K562 (cell line): ENCODE measurements at regions of chr11 and their contacts with region 1.

Region 1: DNA sequence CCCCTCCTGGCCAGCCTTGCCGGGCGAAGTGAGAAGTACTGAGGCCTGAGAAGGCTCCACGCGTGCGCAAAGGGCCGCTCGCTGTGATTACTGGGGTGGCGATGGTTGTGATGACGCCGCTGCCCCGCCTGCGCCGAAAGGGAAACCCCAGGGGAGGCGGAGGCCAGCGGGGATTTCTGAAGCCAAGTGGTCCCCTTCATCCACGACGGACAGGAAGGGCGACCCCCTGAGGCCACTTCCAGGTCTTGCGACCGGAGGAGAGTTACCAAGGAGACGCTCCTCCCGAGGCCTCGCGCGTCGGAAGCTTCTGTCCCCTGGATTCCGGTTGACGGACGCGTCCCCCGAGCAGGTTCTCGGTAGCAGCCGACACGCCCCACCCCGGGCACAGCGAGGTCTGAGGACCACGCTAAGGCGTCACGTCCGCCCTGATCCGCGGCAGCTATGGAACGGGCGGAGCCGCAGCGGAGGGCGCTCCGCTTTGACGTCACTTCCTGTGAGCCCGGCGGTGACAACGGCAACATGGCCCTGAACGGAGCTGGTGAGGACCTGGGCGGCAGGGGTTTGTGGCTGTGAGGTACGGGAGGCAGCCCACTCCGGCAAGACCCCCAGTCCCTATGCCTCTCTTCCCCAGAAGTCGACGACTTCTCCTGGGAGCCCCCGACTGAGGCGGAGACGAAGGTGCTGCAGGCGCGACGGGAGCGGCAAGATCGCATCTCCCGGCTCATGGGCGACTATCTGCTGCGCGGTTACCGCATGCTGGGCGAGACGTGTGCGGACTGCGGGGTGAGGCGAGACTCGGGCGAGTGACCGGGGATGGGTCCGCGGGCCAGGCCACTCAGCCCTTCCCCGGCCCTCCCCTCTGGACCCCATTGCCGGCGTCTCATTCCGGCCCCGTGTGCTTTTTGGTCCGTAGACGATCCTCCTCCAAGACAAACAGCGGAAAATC is at the start of gene ZNRD2:
- DNase-seq: peak; percentile 88 to 99 (median 92)
- ATAC-seq: peak; percentile 82
- H3K4me3 ChIP-seq: peak within 1 kb of the TSS; percentile 65
- H3K27ac ChIP-seq: peak within 1 kb of the TSS; percentile 68
- H3K4me1 ChIP-seq: peaks cover 39 to 63% of the 10 kb centered on the region in 2 experiments
- H3K27me3 ChIP-seq: no peaks in the 10 kb centered on the region
- CTCF ChIP-seq: peak; percentile 77 to 86 (median 81)
- EP300 ChIP-seq: no peak
- POLR2A ChIP-seq: peak; percentile 85
- RAD21 ChIP-seq: peak; percentile 51 to 75
- polyA plus RNA-seq, gene ZNRD2: 35.6 to 66.3 TPM

Region 2: GRCh38 chr11:65471410-65471762 is 98.9 kb before region 1 on chr11:
- CTCF ChIA-PET with region 1: no interaction called
- POLR2A ChIA-PET with region 1: no interaction called
- in situ Hi-C with region 1: no loop called
- intact Hi-C with region 1: loop called (anchors 5 kb)
- DNase-seq: peak; percentile 63 to 91 (median 77)
- ATAC-seq: peak; percentile 88
- H3K4me3 ChIP-seq: peak overlapping the region; percentile 42
- H3K27ac ChIP-seq: peak overlapping the region; percentile 96
- H3K4me1 ChIP-seq: peaks cover 38 to 55% of the 10 kb centered on the region in 2 experiments
- H3K27me3 ChIP-seq: no peaks in the 10 kb centered on the region
- CTCF ChIP-seq: peak; percentile 81 to 94 (median 94)
- EP300 ChIP-seq: no peak
- POLR2A ChIP-seq: no peak
- RAD21 ChIP-seq: peak; percentile 76 to 91

Region 3: DNA sequence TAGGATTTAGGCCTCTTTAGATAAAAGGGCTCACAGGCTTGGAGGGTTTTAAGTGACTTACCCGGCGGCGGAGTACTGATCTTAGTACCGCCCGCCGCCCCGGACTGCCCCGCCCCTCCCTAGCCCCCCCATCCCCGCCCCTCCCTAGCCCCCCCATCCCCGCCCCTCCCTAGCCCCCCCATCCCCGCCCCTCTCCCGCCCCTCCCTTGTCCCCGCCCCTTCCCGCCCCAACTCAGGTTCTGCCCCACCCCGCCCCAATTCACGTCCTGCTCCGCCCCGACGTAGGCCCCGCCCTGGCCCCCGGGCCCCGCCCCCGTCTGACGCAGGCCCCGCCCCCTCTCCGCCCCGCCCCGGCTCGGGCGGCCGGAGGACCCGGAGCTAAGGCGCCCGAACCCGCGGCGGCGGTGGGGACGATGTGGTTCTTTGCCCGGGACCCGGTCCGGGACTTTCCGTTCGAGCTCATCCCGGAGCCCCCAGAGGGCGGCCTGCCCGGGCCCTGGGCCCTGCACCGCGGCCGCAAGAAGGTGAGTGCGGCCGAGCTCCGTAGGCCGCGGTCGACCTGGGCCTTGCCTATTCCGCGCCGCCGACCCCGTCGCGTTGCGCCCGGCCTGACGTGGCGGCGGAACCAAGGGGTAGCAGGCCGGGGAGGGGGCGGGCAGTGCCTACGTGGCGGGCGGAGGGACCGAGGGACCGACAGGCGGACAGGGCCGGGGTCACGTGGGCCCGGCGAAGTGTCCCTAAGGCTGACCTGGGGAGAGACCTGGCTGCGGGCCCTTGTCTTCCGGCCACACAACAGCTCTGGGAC is 45.3 kb before region 1 on chr11 and contains the start of gene SCYL1:
- CTCF ChIA-PET with region 1: no interaction called
- POLR2A ChIA-PET with region 1: interaction called, 4 read pairs
- in situ Hi-C with region 1: no loop called
- intact Hi-C with region 1: loop called (anchors 5 kb)
- DNase-seq: peak; percentile 74 to 96 (median 95)
- ATAC-seq: peak; percentile 87
- H3K4me3 ChIP-seq: peak within 1 kb of the TSS; percentile 100
- H3K27ac ChIP-seq: peak within 1 kb of the TSS; percentile 90
- H3K4me1 ChIP-seq: peaks cover 38 to 48% of the 10 kb centered on the region in 2 experiments
- H3K27me3 ChIP-seq: no peaks in the 10 kb centered on the region
- CTCF ChIP-seq: no peak
- EP300 ChIP-seq: no peak
- POLR2A ChIP-seq: peak; percentile 67
- RAD21 ChIP-seq: no peak
- polyA plus RNA-seq, gene SCYL1: 1.9 to 4.7 TPM

Region 4: DNA sequence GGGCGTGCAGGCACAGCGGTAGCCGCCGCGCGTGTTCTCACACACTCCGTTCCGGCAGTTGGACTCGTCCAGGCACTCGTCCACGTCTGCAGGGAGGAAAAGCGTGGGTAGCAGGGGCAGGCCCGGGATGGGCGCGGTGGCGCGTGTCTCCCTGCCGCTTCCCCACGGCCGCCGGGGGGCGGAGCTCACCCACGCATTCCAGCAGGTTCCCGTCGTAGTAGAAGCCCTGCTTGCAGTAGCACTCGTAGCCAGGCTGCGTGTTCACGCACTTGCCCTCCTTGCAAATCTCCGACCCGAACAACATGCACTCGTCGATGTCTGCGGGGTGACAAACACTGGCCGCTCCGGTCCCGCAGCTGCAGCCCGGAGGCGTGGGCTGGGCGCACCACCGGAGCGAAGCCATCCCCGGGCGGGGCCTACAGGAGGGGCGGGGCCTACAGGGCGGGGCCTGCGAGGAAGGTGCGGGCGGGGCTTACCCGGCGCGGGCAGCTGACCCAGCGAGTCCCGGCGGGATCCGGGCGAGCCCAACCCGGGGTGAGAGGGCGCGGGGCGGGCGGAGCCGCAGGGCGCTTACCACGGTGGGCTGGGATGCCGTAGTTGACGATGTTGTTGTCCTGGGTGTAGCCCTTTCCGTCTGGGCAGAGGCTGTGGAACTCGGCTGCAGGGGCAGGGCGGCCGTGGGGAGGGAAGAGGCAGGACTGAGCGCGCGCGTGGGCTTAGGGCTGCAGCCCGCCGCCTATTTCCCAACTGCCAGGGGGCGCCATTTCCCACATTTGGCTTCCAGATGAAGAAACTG is 29.8 kb before region 1 on chr11:
- CTCF ChIA-PET with region 1: interaction called, 63 read pairs
- POLR2A ChIA-PET with region 1: interaction called, 7 read pairs
- in situ Hi-C with region 1: no loop called
- intact Hi-C with region 1: loop called (anchors 1 kb)
- DNase-seq: peak; percentile 92 to 97 (median 94)
- ATAC-seq: peak; percentile 97
- H3K4me3 ChIP-seq: peak overlapping the region; percentile 76
- H3K27ac ChIP-seq: peak overlapping the region; percentile 78
- H3K4me1 ChIP-seq: peaks cover 9 to 48% of the 10 kb centered on the region in 2 experiments
- H3K27me3 ChIP-seq: no peaks in the 10 kb centered on the region
- CTCF ChIP-seq: peak; percentile 88 to 94 (median 92)
- EP300 ChIP-seq: no peak
- POLR2A ChIP-seq: peak; percentile 69
- RAD21 ChIP-seq: peak; percentile 92 to 96

Region 5: DNA sequence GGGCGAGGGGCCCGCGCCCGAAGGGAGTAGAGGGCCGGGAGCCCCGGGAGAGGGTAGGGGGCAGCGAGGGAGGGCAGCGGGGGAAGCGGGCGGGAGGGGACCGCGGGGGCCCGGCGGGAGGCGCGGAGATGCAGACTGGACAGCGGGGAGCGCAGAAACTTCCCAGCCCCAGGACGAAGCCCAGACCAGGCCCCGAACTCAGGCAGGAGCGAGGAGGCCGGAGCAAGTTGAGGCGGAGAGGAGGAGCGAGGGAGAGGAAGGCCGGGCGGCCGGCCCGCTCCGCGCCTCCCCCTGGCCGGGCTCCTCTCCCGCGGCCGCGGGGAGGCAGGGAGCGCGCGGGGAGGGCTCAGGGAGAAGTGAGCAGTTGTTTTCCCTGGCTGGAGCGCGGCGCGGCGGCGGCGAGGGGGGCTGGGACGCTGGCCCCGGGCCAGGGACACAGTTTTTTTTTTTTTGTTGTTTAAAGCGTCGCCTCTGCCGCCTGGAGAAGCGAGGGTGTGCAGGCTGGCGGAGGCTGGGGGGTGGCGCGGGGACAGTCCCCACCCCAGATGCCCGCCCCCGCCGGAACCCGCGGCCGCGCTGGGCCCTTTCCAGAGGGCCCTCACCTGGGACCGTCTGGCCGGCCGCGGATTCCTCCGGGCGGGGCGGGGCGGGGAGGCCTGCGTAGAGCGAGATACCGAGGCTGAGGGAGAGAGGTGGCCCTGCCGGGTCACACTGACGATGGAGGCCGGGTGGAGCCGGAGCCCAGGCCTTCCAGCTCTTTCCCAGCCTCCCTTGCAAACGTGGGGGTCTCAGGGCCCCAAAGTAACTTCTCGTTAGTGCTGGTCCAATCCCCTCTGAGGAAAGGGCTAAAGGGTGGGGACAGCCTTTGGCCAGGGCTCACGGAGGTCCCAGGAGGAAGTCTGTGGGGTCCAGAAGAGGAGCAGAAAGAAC is 12.0 kb before region 1 on chr11 and contains the start of gene LTBP3:
- CTCF ChIA-PET with region 1: interaction called, 3 read pairs
- POLR2A ChIA-PET with region 1: interaction called, 22 read pairs
- in situ Hi-C with region 1: no loop called
- intact Hi-C with region 1: no loop called
- DNase-seq: peak; percentile 85 to 90 (median 88)
- ATAC-seq: peak; percentile 87
- H3K4me3 ChIP-seq: peak within 1 kb of the TSS; percentile 41
- H3K27ac ChIP-seq: peak within 1 kb of the TSS; percentile 68
- H3K4me1 ChIP-seq: peaks cover 54 to 81% of the 10 kb centered on the region in 2 experiments
- H3K27me3 ChIP-seq: no peaks in the 10 kb centered on the region
- CTCF ChIP-seq: peak in 1 of 3 experiments; percentile 2; a peak in 2 of 6 replicates
- EP300 ChIP-seq: peak; percentile 4; the same call in 1 of the 2 replicates
- POLR2A ChIP-seq: peak; percentile 42; the same call in 1 of the 2 replicates
- RAD21 ChIP-seq: no peak
- polyA plus RNA-seq, gene LTBP3: 0.06 to 0.14 TPM

Region 6: DNA sequence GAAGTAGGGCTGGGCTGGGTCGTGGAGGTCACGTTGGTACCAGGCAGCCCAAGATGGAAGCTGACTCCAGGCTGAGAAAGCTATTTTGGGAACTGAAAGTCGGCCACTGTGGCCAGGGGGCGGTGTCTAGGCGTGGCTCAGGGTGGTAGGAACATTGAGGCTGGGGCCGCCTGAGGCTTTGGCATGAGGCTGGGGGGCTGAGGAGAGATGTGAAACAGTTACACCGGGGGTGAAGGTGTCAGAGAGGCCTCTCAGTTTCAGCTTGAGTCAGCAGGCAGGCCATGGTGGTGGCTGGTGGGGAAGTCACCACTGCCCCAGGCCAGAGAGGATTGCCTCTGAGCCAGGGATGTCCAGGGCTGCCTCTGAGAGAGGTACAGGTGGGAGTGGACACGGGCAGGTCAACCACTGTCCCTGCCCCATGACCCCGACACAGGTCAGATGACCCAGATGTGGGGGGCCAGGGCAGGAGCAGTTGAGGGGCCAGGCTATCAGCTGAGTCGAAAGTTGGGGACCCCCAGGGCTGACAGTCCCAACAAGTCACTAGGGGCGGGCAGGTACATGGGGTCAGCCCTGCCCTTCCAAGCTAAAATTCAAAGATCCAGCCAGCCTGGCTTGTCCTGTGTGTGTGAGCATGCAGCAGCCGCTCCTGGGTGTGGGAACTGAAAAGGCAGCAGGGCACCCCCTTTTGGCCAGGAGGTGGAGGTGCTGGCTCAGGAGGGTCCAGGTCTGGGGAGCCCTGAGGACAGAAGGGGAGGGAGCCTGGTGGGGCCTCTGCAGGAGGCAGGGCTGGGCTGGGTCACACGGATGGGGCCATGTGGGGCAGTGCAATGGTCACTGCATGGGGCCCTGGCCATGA is 18.2 kb after region 1 on chr11:
- CTCF ChIA-PET with region 1: no interaction called
- POLR2A ChIA-PET with region 1: interaction called, 11 read pairs
- in situ Hi-C with region 1: no loop called
- intact Hi-C with region 1: loop called (anchors 1 kb)
- DNase-seq: peak; percentile 66 to 84 (median 77)
- ATAC-seq: peak; percentile 97
- H3K4me3 ChIP-seq: no peak overlapping the region
- H3K27ac ChIP-seq: peak overlapping the region; percentile 31; the same call in 1 of the 3 replicates
- H3K4me1 ChIP-seq: peaks cover 16 to 70% of the 10 kb centered on the region in 2 experiments
- H3K27me3 ChIP-seq: no peaks in the 10 kb centered on the region
- CTCF ChIP-seq: peak; percentile 83 to 90 (median 84)
- EP300 ChIP-seq: 0 out of 2 replicates have a peak, but pooled peaks have one; percentile 12
- POLR2A ChIP-seq: no peak
- RAD21 ChIP-seq: peak; percentile 36 to 69

Region 7: GRCh38 chr11:65606876-65607613 is 36.8 kb after region 1 on chr11:
- CTCF ChIA-PET with region 1: no interaction called
- POLR2A ChIA-PET with region 1: no interaction called
- in situ Hi-C with region 1: no loop called
- intact Hi-C with region 1: no loop called
- DNase-seq: peak; percentile 67 to 88 (median 81)
- ATAC-seq: peak; percentile 93
- H3K4me3 ChIP-seq: no peak overlapping the region
- H3K27ac ChIP-seq: no peak overlapping the region
- H3K4me1 ChIP-seq: peaks cover 9 to 39% of the 10 kb centered on the region in 2 experiments; a peak in 4 of 5 replicates
- H3K27me3 ChIP-seq: no peaks in the 10 kb centered on the region
- CTCF ChIP-seq: no peak
- EP300 ChIP-seq: no peak
- POLR2A ChIP-seq: no peak
- RAD21 ChIP-seq: no peak

Region 8: GRCh38 chr11:65637794-65638317 is 67.6 kb after region 1 on chr11 and contains the start of gene SIPA1:
- CTCF ChIA-PET with region 1: no interaction called
- POLR2A ChIA-PET with region 1: no interaction called
- in situ Hi-C with region 1: no loop called
- intact Hi-C with region 1: loop called (anchors 2 kb)
- DNase-seq: peak; percentile 84 to 93 (median 87)
- ATAC-seq: peak; percentile 87
- H3K4me3 ChIP-seq: peak within 1 kb of the TSS; percentile 85
- H3K27ac ChIP-seq: peak within 1 kb of the TSS; percentile 93
- H3K4me1 ChIP-seq: peaks cover 32 to 95% of the 10 kb centered on the region in 2 experiments
- H3K27me3 ChIP-seq: no peaks in the 10 kb centered on the region
- CTCF ChIP-seq: peak; percentile 69 to 74 (median 71)
- EP300 ChIP-seq: 0 out of 2 replicates have a peak, but pooled peaks have one; percentile 5
- POLR2A ChIP-seq: peak; percentile 84; the same call in 1 of the 2 replicates
- RAD21 ChIP-seq: peak; percentile 19 to 67
- polyA plus RNA-seq, gene SIPA1: 0.25 to 1.4 TPM

Region 9: DNA sequence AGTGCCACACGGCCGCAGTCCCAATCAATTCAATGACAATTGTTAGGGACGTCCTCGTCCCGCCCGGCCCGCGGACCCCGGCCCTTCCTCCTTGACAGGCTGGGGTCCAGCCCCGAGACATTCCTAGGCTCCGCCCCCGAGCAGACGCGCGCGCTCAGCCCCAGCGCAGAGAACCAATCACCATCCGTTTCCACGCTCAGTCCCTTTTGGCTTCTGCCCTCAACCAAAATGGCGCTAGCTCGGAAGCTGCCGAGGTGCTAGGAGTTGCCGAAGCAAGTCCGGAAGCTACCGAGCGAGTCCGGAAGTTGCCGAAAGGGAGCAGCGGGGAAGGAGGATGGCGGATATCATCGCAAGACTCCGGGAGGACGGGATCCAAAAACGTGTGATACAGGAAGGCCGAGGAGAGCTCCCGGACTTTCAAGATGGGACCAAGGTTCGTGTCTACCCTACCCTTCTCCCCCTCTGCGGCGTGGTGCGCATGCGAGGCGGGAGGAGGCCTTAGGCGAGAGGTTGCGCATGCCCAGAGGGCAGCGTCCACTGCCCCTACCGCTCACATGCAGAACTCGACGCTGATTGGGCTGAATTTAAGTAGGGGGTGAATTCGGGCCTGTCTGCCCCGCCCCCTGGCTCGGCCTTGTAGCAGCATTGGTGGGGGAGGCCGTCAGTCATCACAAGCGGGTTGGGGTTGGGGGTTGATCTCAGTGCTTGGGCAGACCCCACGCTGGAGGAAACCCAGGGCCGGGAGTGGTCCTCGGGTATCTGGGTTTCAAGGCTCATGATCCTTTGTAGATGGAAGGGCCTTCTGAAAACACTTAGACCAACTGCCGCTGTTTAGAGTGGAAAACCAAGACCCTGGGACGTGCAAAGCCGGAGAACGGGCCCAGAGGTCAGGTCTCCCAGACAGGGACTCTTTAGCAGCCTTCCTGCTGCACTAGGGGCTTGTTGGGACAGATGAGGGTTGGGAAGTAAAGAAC is 1912.9 kb after region 1 on chr11 and contains the start of gene AIP:
- CTCF ChIA-PET with region 1: no interaction called
- POLR2A ChIA-PET with region 1: no interaction called
- in situ Hi-C with region 1: no loop called
- intact Hi-C with region 1: no loop called
- DNase-seq: peak; percentile 97 to 99 (median 98)
- ATAC-seq: peak; percentile 98
- H3K4me3 ChIP-seq: peak within 1 kb of the TSS; percentile 49
- H3K27ac ChIP-seq: peak within 1 kb of the TSS; percentile 73
- H3K4me1 ChIP-seq: peaks cover 30 to 49% of the 10 kb centered on the region in 2 experiments
- H3K27me3 ChIP-seq: no peaks in the 10 kb centered on the region
- CTCF ChIP-seq: 0 out of 6 replicates have a peak, but pooled peaks of 2 of the 3 experiments have one; percentile 7 to 12
- EP300 ChIP-seq: no peak
- POLR2A ChIP-seq: peak; percentile 81
- RAD21 ChIP-seq: no peak
- polyA plus RNA-seq, gene AIP: 5.2 to 16.2 TPM